Activated naive CD4-positive, alpha-beta T cell treated with anti-CD3 and anti-CD28 coated beads for 36 hours (primary cell): ENCODE measurements at regions of chr4 and their contacts with region 1.

Region 1: DNA sequence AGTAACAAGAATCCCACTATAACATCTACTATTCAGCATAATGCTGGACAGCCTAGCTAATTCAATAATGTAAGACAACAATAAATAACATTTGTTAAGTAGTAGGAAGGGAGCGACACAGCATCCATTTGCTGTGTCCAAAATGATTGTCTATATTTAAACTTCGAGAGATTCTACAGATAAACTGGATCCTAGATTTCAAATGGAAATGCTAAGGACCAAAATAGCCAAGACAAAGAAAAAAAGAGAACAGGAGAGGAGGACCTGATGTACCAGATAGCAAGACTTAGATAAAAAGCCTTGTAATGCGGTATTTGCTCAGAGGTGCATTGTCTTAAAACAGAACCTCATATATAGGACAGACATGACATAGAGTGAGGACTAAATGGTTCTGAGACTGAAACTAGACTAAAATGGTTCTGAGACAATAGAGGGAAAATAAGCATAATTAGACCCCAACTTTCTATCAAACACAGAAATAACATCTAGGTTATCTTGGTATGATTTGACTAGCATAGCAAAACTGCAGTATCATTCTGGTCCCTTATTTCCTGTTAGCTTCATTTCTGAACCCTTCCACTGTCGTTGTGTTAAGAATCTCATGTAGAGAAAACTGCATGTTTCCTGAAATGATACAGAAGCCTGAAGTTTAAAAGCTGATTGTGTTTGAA is 3.8 kb downstream of the HPGDS start:
- DNase-seq: no peak
- H3K4me3 Mint-ChIP-seq: peak overlapping the region; percentile 39
- H3K27ac Mint-ChIP-seq: peak overlapping the region; percentile 63
- H3K4me1 Mint-ChIP-seq: peaks cover 22% of the 10 kb centered on the region
- H3K27me3 Mint-ChIP-seq: peaks cover 4% of the 10 kb centered on the region

Region 2: DNA sequence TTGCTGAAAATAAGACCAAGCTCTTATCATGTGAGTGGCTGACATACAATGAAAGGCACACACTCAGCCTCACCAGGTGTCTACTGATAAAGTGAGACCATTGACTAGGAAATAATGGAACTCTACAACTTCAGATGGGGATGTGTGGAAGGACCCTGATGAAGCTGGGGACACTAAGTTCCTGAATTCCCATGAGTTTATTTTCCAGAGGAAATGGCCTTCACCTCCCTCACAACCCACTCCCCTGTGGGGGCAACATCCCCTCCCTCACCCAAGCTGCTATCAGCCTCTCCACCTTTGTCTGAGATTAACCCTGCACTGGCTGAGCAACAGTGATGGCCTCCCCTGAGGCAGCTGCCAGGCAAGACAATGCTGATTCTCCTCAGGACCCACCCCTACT is 186.3 kb before region 1 on chr4:
- CTCF ChIA-PET with region 1: no interaction called
- intact Hi-C with region 1: no loop called
- DNase-seq: no peak
- H3K4me3 Mint-ChIP-seq: no peak overlapping the region
- H3K27ac Mint-ChIP-seq: no peak overlapping the region
- H3K4me1 Mint-ChIP-seq: no peaks in the 10 kb centered on the region
- H3K27me3 Mint-ChIP-seq: peaks cover 13% of the 10 kb centered on the region

Region 3: DNA sequence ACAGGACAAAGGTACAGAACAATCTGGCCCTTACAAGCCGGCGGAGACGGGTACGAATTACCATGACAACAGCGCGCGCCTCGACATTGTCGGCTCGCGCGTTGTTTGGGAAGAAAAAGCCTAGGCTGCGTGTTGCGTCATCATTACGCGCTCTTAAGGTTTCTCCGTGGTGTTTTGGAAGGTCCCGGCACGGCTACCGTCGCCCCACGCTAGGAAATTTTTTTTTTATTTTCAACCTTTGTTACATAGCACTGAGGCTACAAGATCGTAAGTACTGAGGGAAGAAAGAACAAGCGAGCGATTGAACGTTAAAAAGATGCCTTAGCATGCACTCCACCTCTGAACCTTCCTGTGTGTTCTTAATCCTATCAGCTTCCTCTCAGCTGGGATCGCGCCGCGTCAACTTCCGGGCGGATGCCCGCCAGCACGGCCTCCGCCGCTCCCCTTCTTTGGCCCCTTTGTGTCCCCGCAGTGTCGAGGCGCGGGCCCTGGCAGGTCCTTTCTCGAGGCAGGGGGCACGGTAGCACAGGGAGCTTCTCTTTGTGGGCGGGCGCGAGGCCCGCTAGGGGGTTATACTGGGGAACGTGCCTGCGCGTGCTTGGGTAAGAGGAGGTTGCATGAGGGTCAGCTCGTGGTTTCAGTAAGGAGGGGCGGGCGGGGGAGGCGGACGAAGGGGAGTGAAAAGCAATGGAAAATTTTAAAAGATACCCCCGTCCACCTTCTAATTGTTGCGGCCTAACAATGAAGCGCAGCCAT is 131.2 kb before region 1 on chr4 and contains the start of gene SMARCAD1:
- CTCF ChIA-PET with region 1: no interaction called
- intact Hi-C with region 1: loop called (anchors 2 kb)
- DNase-seq: peak; percentile 95
- H3K4me3 Mint-ChIP-seq: peak within 1 kb of the TSS; percentile 88
- H3K27ac Mint-ChIP-seq: peak within 1 kb of the TSS; percentile 97
- H3K4me1 Mint-ChIP-seq: peaks cover 32% of the 10 kb centered on the region
- H3K27me3 Mint-ChIP-seq: no peaks in the 10 kb centered on the region
- total RNA-seq, gene SMARCAD1: 20.4 to 20.7 TPM

Region 4: DNA sequence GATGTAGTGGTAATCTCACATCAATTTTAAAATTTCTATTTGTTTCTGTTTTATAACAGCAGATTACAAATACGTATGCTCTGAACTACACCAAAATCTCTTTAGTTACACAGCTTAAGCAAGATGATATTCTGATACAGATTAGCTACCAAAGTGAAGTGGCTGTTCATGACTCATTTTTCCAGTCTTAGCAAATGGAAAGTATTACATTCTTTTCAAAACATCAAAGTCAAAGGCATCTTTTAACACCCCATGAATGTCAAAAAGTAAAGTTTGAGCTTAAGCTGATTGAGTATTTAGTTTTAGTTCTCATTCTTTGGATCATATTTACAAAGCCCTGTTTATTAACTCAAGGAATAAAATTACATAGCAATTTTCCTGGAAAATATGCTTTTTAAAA is 10.4 kb after region 1 on chr4:
- CTCF ChIA-PET with region 1: no interaction called
- intact Hi-C with region 1: loop called (anchors 1 kb)
- DNase-seq: no peak
- H3K4me3 Mint-ChIP-seq: no peak overlapping the region
- H3K27ac Mint-ChIP-seq: no peak overlapping the region
- H3K4me1 Mint-ChIP-seq: peaks cover 42% of the 10 kb centered on the region
- H3K27me3 Mint-ChIP-seq: peaks cover 18% of the 10 kb centered on the region

Region 5: DNA sequence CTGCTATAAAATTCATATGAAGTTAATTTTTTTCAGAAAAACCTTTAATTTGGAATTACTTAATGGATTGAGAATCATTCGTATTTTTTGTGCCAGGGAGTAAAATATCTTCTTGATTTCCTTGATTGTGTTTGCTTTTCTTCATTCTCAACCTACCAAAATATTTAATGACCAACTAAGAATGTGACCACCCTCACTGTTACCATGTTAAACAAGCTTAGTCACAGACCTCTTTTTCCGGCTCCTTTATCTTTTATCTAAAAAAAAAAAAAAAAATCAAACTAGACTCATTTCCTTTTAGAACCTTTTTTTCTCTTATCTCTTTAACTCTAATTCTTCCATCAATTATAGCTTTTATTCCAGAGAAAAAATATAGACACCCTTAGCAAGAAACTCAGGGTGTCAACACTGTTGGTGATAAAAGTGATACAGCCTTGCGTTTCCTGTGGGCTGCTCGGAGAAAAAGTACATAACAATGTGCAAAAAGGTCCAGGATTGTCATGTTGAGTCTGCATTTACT is 24.4 kb after region 1 on chr4:
- CTCF ChIA-PET with region 1: no interaction called
- intact Hi-C with region 1: no loop called
- DNase-seq: no peak
- H3K4me3 Mint-ChIP-seq: no peak overlapping the region
- H3K27ac Mint-ChIP-seq: no peak overlapping the region
- H3K4me1 Mint-ChIP-seq: no peaks in the 10 kb centered on the region
- H3K27me3 Mint-ChIP-seq: peaks cover 8% of the 10 kb centered on the region

Region 6: GRCh38 chr4:94390804-94391410 is 52.1 kb after region 1 on chr4:
- CTCF ChIA-PET with region 1: interaction called, 8 read pairs
- intact Hi-C with region 1: loop called (anchors 2 kb)
- DNase-seq: peak; percentile 47
- H3K4me3 Mint-ChIP-seq: no peak overlapping the region
- H3K27ac Mint-ChIP-seq: no peak overlapping the region
- H3K4me1 Mint-ChIP-seq: no peaks in the 10 kb centered on the region
- H3K27me3 Mint-ChIP-seq: peaks cover 7% of the 10 kb centered on the region

Region 7: DNA sequence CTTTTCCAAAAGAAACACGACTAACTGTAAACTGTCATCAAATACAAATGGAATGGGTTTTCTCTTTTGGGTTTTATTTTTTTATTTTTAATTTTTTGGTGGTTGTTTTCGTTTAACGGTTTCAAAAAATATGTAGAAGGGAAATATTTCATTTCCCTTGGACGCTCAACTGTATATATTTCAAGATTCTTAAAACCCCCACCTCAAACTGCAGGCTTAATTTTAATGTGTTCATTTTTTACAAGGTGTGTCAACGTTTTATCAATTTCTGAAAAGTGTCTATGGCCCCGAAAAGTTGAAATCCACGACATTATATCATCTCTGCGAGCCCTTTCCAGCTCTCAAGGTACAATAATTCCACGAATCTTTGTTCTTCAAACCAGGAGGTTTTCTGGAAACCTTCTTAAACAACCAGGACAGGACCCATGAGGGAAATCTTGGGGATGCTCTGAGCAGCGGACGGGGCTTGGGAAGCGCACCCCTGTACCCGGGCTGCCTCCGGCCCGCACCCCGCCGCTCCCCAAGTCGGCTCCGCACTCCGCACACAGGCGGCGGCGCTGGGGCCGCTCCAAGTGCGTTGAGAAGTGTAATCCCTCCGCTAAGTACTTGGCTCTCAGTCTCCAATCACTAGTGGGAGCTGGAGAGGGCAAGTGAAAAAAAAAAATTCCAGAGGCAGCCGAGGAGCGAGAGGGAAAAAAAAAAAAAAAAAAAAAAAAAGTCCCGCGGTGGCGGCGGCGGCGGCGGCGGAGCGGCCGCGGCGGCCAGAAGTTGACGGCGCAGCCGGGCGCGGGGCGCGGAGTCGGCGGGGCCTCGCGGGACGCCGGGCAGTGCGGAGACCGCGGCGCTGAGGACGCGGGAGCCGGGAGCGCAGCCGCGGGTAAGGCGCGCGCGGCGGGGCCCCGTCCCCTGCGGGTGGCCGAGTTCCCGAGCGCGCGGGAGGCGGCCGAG is 418.6 kb after region 1 on chr4 and contains the start of gene BMPR1B:
- CTCF ChIA-PET with region 1: no interaction called
- intact Hi-C with region 1: no loop called
- DNase-seq: no peak
- H3K4me3 Mint-ChIP-seq: peak within 1 kb of the TSS; percentile 57
- H3K27ac Mint-ChIP-seq: no peak within 1 kb of the TSS
- H3K4me1 Mint-ChIP-seq: peaks cover 12% of the 10 kb centered on the region
- H3K27me3 Mint-ChIP-seq: peaks cover 76% of the 10 kb centered on the region
- total RNA-seq, gene BMPR1B: 0.10 TPM in 1 of 2 experiments, not detected in the other

Region 8: DNA sequence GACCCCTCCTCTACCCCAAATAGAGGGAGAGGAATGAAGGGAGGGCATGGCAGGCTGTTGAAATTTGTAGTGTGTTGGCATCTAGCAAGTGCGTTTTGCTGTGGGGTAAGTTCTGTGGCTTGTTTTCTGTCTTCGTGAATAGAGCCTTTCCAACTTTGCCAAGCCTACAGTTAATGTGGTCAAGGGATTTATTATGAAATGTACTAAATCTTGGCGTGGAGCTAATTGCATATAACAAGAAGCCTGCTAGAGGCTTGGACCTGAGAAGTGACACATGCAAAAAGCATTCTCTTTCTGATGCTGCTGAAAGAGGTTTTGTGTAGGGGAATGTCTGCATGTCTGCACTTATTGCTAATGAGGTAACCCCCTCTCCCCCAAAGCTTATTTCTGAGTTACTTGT is 551.1 kb after region 1 on chr4:
- CTCF ChIA-PET with region 1: no interaction called
- intact Hi-C with region 1: no loop called
- DNase-seq: no peak
- H3K4me3 Mint-ChIP-seq: no peak overlapping the region
- H3K27ac Mint-ChIP-seq: no peak overlapping the region
- H3K4me1 Mint-ChIP-seq: no peaks in the 10 kb centered on the region
- H3K27me3 Mint-ChIP-seq: no peaks in the 10 kb centered on the region